ENCODE measurements at regions of chr9 and their contacts with region 1.

Region 1: GRCh38 chr9:36995927-36996705 is 38.0 kb downstream of the PAX5 start:
- DNase-seq: no peak
- H3K4me3 ChIP-seq: no peak overlapping the region
- H3K27me3 ChIP-seq: peaks cover 32% of the 10 kb centered on the region
- CTCF ChIP-seq: peak; percentile 71

Region 2: DNA sequence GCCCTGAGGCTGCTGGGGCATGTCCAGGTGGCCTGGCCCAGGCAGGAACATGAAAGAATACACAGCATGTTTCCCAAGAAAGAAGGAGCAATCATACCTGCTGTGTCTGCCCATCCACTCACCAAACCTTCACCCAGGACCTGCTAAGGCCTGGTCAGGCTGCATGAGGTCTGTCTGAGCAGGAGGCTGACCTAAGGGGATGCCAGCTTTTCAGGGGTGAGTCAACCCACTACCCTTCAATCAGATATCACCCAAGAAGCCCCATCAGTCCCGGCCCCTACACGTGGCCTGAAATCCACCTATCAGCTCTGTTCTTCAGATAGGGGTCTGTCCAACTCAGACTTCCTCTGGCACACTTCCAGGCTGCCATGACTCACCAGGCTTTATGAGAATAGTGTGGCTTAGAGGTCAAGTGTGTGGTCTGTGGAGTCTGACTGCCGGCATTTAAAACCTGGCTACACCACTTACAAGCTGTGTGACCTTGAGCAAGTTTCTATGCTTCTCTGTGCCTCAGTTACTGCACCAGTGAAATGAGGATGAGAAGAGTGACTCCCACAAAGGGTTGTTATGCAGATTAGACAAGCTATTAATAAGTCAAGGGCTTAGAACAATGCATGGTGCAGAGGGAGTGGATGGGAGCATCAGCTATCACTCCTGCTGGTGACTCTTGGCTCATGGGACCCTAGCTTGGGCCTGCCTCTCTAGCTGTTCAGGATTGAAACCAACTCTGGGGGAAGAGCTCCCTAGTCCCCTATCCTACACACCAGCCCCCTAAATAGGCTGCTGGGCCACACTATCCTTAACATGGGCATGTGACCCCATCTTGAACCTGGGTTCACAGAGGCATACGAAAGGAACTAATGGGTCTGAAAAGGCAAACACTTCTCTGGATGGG is 92.3 kb before region 1 on chr9:
- CTCF ChIA-PET with region 1: no interaction called
- POLR2A ChIA-PET with region 1: no interaction called
- DNase-seq: no peak
- H3K4me3 ChIP-seq: no peak overlapping the region
- H3K27me3 ChIP-seq: peaks cover 39% of the 10 kb centered on the region
- CTCF ChIP-seq: no peak

Region 3: DNA sequence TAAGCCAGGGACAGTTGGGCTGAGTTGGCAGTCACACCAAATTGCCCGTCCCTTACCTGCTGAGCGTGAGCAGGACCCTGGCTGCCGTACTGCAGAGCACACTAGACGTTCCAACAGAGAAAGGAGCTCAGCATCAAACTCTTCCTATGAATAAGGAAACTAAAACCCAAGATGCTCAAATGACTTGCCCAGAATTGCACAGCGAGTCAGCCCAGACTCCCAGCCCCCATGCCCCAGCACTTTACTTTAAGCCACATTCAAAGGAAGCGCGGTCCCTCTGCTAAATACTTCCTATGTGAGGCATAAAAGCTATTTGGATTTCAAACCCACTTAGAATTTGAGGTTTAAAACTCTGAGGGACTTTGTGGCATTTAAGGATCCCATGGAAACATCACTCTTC is 14.1 kb after region 1 on chr9:
- CTCF ChIA-PET with region 1: interaction called, 10 read pairs
- POLR2A ChIA-PET with region 1: no interaction called
- DNase-seq: no peak
- H3K4me3 ChIP-seq: no peak overlapping the region
- H3K27me3 ChIP-seq: peaks cover 25% of the 10 kb centered on the region
- CTCF ChIP-seq: no peak

Region 4: GRCh38 chr9:37329576-37329975 is 333.5 kb after region 1 on chr9:
- CTCF ChIA-PET with region 1: interaction called, 13 read pairs
- POLR2A ChIA-PET with region 1: no interaction called
- DNase-seq: no peak
- H3K4me3 ChIP-seq: no peak overlapping the region
- H3K27me3 ChIP-seq: no peaks in the 10 kb centered on the region
- CTCF ChIP-seq: peak; percentile 35

Region 5: DNA sequence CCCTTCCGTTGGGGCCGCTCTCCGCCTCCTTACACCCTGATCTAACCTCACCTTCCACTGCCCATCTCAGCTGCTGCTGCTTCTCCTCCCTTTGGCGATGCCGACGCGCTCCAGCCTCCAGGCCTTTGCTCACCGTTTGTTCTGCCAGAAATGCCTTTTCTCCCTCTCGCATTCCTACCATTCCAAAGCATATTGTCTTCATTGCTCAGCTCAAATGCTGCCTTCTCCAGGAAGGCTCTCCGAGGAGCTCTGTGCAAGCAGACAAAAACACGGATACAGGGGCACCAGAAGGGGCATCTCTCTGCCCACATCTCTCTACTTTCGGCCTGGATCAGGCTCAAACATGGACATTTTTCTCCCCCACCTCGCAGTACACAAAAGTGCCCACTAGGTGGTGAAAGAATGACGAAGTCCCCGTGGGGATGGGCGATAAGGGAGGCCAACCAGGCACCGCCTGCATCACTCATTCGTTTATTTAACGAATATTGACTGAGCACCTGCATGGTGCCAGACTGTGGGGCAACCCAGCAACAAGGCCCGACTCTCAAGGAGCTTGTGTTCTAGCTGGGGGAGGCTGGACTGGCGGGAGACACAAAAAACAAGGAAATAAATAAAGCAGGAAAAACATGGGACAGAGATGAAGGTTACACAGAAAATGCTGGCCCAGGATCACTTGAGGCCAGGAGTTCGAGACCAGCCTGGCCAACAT is 419.0 kb after region 1 on chr9:
- CTCF ChIA-PET with region 1: interaction called, 10 read pairs
- POLR2A ChIA-PET with region 1: no interaction called
- DNase-seq: no peak
- H3K4me3 ChIP-seq: no peak overlapping the region
- H3K27me3 ChIP-seq: no peaks in the 10 kb centered on the region
- CTCF ChIP-seq: peak; percentile 80